ENCODE measurements at regions of chr12 and their contacts with region 1.

Region 1: GRCh38 chr12:116863275-116863767 is 17.9 kb downstream of the HRK start:
- DNase-seq: peak; percentile 79
- ATAC-seq: peak; percentile 95
- H3K4me3 Mint-ChIP-seq: no peak overlapping the region
- H3K27ac Mint-ChIP-seq: no peak overlapping the region
- H3K4me1 Mint-ChIP-seq: peaks cover 14% of the 10 kb centered on the region
- H3K27me3 Mint-ChIP-seq: no peaks in the 10 kb centered on the region
- CTCF ChIP-seq: peak; percentile 90

Region 2: GRCh38 chr12:116759783-116760621 is 103.3 kb before region 1 on chr12:
- CTCF ChIA-PET with region 1: interaction called, 21 read pairs
- POLR2A ChIA-PET with region 1: no interaction called
- DNase-seq: peak; percentile 77
- ATAC-seq: peak; percentile 98
- H3K4me3 Mint-ChIP-seq: peak overlapping the region; percentile 51
- H3K27ac Mint-ChIP-seq: peak overlapping the region; percentile 69
- H3K4me1 Mint-ChIP-seq: peaks cover 8% of the 10 kb centered on the region
- H3K27me3 Mint-ChIP-seq: no peaks in the 10 kb centered on the region
- CTCF ChIP-seq: no peak; the same call in 1 of the 2 replicates

Region 3: GRCh38 chr12:116838365-116838764 is 25.0 kb before region 1 on chr12:
- CTCF ChIA-PET with region 1: interaction called, 15 read pairs
- POLR2A ChIA-PET with region 1: no interaction called
- DNase-seq: no peak
- ATAC-seq: no peak
- H3K4me3 Mint-ChIP-seq: no peak overlapping the region
- H3K27ac Mint-ChIP-seq: no peak overlapping the region
- H3K4me1 Mint-ChIP-seq: peaks cover 5% of the 10 kb centered on the region
- H3K27me3 Mint-ChIP-seq: no peaks in the 10 kb centered on the region
- CTCF ChIP-seq: no peak

Region 4: DNA sequence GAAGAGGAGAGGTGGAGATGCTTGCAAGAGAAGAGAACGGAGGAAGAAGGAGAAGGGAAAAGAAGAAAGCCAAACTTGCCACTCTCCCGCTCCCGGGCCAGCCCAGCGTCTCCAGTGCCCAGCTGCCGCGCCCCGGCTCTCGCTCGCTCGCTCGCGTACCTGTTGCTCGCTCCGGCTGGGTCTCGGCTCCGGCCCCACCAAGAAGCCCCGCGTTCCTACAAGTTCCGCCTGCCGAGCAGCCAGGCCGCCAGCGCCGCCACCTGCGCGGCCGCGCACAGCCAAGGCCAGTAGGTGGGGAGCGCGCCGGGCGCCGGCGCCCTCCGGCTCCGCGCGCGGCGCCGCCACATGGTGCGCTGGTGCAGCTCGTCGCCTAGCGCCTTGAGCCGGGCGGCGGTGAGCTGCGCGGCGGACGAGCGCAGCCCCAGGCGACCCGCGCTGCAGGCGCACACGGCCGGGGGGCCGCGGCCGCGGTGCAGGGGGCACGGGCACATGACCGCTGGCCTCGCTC is 17.6 kb after region 1 on chr12:
- CTCF ChIA-PET with region 1: interaction called, 57 read pairs
- POLR2A ChIA-PET with region 1: interaction called, 3 read pairs
- DNase-seq: peak; percentile 71
- ATAC-seq: peak; percentile 41
- H3K4me3 Mint-ChIP-seq: peak overlapping the region; percentile 94
- H3K27ac Mint-ChIP-seq: peak overlapping the region; percentile 57; the same call in 1 of the 2 replicates
- H3K4me1 Mint-ChIP-seq: peaks cover 37% of the 10 kb centered on the region
- H3K27me3 Mint-ChIP-seq: peaks cover 87% of the 10 kb centered on the region
- CTCF ChIP-seq: no peak

Region 5: DNA sequence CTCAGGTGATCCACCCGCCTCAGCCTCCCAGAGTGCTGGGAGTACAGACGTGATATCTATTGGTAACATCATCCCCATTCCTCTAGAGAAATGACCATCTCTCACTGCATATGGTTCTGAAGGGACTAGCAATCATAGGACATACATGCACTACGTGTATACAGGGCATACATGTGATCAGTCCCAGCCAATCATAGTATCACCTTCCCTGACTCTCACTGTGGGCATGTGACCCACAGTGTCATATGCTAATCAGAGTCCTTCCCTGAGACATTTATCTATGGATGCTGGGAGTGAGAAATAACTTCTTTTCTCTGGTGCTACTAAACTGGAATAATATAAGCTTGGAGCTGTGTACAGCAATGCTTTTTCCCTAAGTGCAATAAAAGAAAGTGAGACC is 35.3 kb after region 1 on chr12:
- CTCF ChIA-PET with region 1: interaction called, 18 read pairs
- POLR2A ChIA-PET with region 1: no interaction called
- DNase-seq: no peak
- ATAC-seq: 0 out of 2 replicates have a peak, but pooled peaks have one; percentile 39
- H3K4me3 Mint-ChIP-seq: no peak overlapping the region
- H3K27ac Mint-ChIP-seq: no peak overlapping the region
- H3K4me1 Mint-ChIP-seq: no peaks in the 10 kb centered on the region
- H3K27me3 Mint-ChIP-seq: peaks cover 6% of the 10 kb centered on the region
- CTCF ChIP-seq: no peak

Region 6: DNA sequence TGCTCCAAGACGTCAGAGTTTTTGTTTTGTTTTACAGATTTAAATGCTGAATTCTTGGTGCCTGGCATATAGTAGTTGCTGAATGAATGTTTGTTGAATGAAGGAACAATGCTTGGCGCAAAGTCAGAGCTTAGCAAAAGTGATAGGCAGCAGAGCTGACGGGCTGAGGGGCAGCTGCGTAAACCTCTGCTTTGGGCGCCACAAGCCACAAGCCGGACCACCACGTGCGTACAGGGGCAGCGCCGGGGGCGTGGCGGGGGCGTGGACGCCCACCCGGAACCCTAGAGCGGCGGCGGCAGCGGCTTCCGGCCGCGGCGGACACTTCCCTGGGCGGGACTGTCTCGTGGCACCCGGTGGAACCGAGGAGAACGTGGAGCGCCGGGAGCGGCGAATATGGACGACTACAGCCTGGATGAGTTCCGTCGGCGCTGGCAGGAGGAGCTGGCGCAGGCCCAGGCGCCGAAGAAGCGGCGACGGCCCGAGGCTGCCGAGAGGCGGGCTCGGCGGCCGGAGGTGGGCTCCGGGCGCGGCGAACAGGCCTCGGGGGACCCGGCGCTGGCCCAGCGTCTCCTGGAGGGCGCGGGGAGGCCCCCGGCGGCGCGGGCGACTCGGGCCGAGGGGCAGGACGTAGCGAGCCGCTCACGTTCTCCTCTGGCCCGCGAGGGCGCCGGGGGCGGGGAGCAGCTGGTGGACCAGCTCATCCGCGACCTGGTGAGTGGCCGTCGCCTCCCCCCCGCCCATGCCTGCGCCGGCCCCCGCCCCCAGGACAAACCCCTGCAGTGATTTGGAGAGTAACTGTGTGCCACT is 47.5 kb after region 1 on chr12 and contains the start of gene FBXW8:
- CTCF ChIA-PET with region 1: interaction called, 15 read pairs
- POLR2A ChIA-PET with region 1: no interaction called
- DNase-seq: peak; percentile 76
- ATAC-seq: peak; percentile 79
- H3K4me3 Mint-ChIP-seq: peak within 1 kb of the TSS; percentile 83
- H3K27ac Mint-ChIP-seq: peak within 1 kb of the TSS; percentile 86
- H3K4me1 Mint-ChIP-seq: peaks cover 14% of the 10 kb centered on the region
- H3K27me3 Mint-ChIP-seq: peaks cover 5% of the 10 kb centered on the region
- CTCF ChIP-seq: no peak
- total RNA-seq, gene FBXW8: 15.6 to 18.5 TPM (median 18.0 TPM) in 3 replicates

Region 7: DNA sequence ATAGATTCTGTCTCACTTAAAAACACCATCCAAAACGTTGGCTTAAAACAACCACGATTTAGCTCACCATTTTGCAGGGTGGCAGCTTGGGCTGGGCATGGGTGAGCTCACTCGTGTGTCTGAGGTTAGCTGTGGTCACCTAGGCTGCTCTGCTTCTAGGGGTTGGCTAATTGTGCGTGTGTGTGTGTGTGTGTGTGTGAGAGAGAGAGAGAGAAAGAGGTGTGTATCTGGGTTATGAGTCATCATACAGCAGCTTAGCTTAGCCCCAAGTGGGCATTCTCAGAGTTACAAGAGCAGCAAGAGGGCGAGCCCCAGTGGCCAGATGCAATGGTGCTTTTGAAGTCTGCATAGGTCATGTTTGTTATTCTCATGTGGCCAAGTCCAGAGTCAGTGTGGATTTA is 53.4 kb after region 1 on chr12:
- CTCF ChIA-PET with region 1: interaction called, 15 read pairs
- POLR2A ChIA-PET with region 1: no interaction called
- DNase-seq: no peak
- ATAC-seq: peak; percentile 59
- H3K4me3 Mint-ChIP-seq: no peak overlapping the region
- H3K27ac Mint-ChIP-seq: peak overlapping the region; percentile 3; the same call in 1 of the 2 replicates
- H3K4me1 Mint-ChIP-seq: peaks cover 19% of the 10 kb centered on the region
- H3K27me3 Mint-ChIP-seq: no peaks in the 10 kb centered on the region
- CTCF ChIP-seq: no peak

Measured in WTC11 (cell line).